ENCODE measurements at regions of chr2 and their contacts with region 1.

Region 1: GRCh38 chr2:154623819-154624218 is 74.7 kb upstream of the KCNJ3 start:
- DNase-seq: no peak
- ATAC-seq: no peak
- H3K4me3 ChIP-seq: no peak overlapping the region
- H3K27ac ChIP-seq: no peak overlapping the region
- H3K4me1 ChIP-seq: no peaks in the 10 kb centered on the region
- H3K27me3 ChIP-seq: no peaks in the 10 kb centered on the region
- CTCF ChIP-seq: peak; percentile 43

Region 2: GRCh38 chr2:154527962-154528361 is 95.9 kb before region 1 on chr2:
- intact Hi-C with region 1: no loop called
- DNase-seq: no peak
- ATAC-seq: no peak
- H3K4me3 ChIP-seq: no peak overlapping the region
- H3K27ac ChIP-seq: no peak overlapping the region
- H3K4me1 ChIP-seq: no peaks in the 10 kb centered on the region
- H3K27me3 ChIP-seq: no peaks in the 10 kb centered on the region
- CTCF ChIP-seq: no peak

Region 3: GRCh38 chr2:155235710-155236109 is 611.9 kb after region 1 on chr2:
- intact Hi-C with region 1: loop called in 1 of 2 experiments (anchors 10 kb)
- DNase-seq: no peak
- ATAC-seq: no peak
- H3K4me3 ChIP-seq: no peak overlapping the region
- H3K27ac ChIP-seq: no peak overlapping the region
- H3K4me1 ChIP-seq: no peaks in the 10 kb centered on the region
- H3K27me3 ChIP-seq: no peaks in the 10 kb centered on the region
- CTCF ChIP-seq: no peak

Measured in psoas muscle (tissue), 8 donors.